ENCODE measurements at regions of chr1 and their contacts with region 1.

Region 1: DNA sequence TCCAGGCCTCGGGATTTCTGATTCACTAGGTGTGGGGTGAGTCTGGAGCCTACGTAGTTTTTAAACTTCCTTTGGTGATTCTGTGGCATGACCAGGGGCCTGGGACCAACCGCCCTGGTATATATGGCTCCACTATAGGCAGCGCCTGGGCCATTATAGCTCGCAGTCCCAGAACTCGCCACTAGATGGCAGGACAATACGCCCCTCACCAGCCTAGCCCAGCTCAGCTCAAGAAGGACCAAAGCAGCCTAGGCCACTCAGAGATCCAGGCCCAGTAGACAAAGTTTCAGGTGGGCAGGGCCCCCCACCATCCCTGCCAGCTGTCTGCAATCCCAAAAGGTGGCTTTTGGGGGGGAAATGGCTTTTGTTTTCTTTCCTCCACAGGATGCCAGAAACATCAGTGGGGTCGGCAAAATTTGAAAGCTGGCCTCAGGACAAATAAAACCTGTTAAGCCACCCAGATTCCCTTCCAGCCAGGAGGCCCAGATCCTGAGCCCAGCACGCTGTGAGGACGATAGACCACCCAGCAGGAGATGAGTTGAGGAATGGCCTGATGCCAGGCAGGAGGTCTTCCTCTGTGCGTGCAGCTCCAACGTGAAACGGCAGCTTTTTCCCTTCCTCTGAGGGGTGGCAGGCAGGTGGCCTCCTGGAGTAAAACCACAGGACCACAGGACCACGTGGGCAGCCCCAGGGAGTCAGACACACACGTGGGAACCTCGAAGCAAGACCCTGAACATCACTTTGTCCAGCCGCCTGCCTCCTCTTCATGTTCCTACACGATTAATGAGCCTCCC is 24.8 kb upstream of the TMEM51 start:
- DNase-seq: peak in 8 of 10 donors; percentile 48 to 77 (median 64)
- H3K4me3 ChIP-seq: no peak overlapping the region
- H3K27ac ChIP-seq: no peak overlapping the region
- H3K27me3 ChIP-seq: peaks cover 0 to 5% (median 0%) of the 10 kb centered on the region in 45 donors
- CTCF ChIP-seq: peak; percentile 44 to 90 (median 81)

Region 2: GRCh38 chr1:15070145-15070748 is 58.5 kb before region 1 on chr1:
- intact Hi-C with region 1: loop called in 1 of 2 experiments (anchors 5 kb)
- DNase-seq: no peak
- H3K4me3 ChIP-seq: no peak overlapping the region
- H3K27ac ChIP-seq: peak overlapping the region in 1 of 59 donors; percentile 19
- H3K27me3 ChIP-seq: no peaks in the 10 kb centered on the region
- CTCF ChIP-seq: no peak

Region 3: DNA sequence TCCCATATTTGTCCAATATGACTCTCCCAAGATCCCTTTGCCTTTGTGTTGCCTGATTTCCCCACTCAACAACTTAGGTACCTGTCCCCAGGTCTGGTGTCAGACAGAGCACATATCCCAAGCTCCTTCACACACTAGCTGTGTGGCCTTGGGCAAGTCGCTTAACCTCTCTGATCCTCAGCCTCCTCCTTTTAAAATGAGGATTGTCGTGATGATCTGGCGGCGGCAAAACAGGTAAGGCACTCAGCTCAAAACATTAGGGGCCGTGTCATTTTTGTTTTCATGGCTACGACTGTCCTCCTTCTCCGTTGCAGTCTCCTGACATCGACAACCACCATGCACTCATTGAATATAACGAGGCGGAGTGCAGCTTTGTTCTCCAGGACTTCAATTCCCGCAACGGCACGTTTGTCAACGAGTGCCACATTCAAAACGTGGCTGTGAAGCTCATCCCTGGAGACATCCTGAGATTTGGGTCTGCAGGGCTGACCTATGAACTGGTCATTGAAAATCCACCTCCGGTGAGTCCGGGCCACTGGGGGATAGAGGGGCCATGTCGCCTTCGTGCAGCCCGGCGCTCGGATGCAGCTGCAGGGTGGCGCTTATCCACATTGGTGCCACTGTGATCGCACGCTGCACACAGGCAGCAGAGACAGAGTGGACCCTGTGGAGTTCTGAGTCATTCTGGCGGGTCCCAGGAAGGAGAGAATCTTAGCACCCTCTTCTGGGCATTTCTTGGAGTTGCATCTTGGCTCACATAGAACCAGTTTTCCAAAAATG is 143.5 kb after region 1 on chr1:
- intact Hi-C with region 1: loop called in 1 of 2 experiments (anchors 2 kb)
- DNase-seq: peak in 8 of 10 donors; percentile 40 to 71 (median 58)
- H3K4me3 ChIP-seq: peak overlapping the region in 26 of 59 donors; percentile 1 to 43 (median 28)
- H3K27ac ChIP-seq: no peak overlapping the region
- H3K27me3 ChIP-seq: peaks cover 0 to 15% (median 0%) of the 10 kb centered on the region in 45 donors
- CTCF ChIP-seq: peak; percentile 49 to 93 (median 80)